ENCODE measurements at regions of chr20 and their contacts with region 1.

Region 1: DNA sequence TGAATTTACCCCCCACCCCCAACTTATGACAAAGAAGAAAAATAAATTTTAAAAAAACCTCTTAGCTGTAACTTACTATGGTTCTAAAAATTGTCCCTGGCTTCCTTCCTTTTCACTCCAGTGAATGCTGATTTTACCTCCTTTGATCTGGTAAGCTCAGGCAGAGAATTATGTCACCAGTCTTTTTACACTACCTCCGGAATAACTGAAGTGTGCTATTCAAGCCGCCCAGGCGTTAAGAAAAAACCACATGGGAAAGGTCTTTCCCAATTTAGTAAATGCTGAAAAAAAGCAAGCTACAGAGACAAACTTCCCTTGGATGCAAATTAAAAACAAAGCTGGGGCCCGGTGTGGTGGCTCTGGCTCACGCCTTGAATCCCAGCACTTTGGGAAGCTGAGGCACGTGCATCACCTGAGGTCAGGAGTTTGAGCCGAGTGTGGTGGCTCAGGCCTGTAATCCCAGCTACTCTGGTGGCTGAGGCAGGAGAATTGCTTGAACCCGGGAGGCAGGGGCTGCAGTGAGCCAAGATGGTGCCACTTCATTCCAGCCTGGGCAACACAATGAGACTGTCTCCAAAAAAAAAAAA is 12.4 kb downstream of the SNX5 start:
- DNase-seq: no peak
- ATAC-seq: no peak
- H3K4me3 ChIP-seq: no peak overlapping the region
- H3K27ac ChIP-seq: no peak overlapping the region
- H3K4me1 ChIP-seq: peaks cover 36% of the 10 kb centered on the region
- H3K27me3 ChIP-seq: no peaks in the 10 kb centered on the region
- CTCF ChIP-seq: no peak

Region 2: DNA sequence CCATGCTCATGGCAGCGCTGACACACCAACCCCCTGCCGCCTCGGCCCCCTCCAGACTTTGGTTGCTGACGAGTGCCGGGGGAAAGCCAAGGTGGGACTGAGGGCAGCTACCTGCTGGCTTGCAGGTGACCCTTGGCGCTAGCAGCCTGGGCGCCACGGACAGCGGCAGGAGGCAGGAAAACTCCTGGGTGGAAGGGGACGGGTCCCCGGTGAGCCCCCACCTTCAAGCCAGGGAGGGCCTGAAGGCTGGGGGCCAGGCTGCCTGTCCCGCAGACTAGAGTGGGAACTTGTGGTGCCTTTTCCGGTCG is 981.4 kb before region 1 on chr20:
- CTCF ChIA-PET with region 1: no interaction called
- POLR2A ChIA-PET with region 1: interaction called, 13 read pairs
- in situ Hi-C with region 1: no loop called
- intact Hi-C with region 1: no loop called
- DNase-seq: no peak
- ATAC-seq: no peak
- H3K4me3 ChIP-seq: no peak overlapping the region
- H3K27ac ChIP-seq: no peak overlapping the region
- H3K4me1 ChIP-seq: no peaks in the 10 kb centered on the region
- H3K27me3 ChIP-seq: no peaks in the 10 kb centered on the region
- CTCF ChIP-seq: no peak

Region 3: DNA sequence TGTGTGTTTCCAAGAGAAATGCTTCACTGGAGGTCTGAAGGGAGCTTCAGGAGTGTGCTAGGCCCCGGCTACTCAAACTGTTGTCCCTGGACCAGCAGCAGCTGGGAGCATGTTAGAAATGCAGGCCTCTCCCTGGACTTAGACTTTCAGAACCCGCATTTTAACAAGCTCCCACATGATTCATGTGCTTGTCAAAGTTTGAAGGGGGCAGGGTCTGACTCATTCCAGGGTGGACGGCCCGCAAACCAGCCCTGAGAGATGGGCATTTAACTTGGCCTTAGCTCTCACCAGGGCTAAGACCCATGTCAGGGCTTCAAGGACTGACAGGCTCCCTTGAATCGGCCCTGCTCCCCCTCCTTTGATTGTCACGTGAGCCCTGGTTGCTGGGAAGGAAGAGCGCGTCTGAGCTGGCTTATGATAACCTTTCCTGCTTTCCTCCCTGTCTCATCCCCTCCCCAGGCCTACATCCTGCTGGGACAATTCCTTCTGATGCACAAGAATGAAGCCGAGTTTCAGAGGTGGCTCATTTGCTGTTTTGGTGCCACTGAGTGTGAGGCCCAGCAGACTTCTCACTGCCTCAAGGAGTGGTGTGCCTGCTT is 220.9 kb before region 1 on chr20:
- CTCF ChIA-PET with region 1: interaction called, 16 read pairs
- POLR2A ChIA-PET with region 1: no interaction called
- in situ Hi-C with region 1: no loop called
- intact Hi-C with region 1: no loop called
- DNase-seq: no peak
- ATAC-seq: no peak
- H3K4me3 ChIP-seq: no peak overlapping the region
- H3K27ac ChIP-seq: no peak overlapping the region
- H3K4me1 ChIP-seq: no peaks in the 10 kb centered on the region
- H3K27me3 ChIP-seq: no peaks in the 10 kb centered on the region
- CTCF ChIP-seq: no peak

Region 4: DNA sequence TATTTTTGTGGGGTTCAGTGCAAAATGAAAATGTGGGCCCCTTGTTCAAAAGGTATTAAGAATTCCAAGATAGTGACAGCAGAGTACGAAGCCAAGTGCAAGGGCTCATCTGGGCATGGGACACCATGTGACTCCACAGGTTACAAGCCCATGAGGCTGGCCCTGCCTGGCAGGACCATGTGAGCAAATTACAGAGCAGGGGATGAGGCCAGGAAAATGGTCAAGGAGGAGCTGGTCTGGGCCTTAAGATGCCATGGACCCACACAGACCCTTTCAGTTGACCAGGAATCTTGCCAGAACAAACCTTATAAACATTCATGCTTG is 74.5 kb before region 1 on chr20:
- CTCF ChIA-PET with region 1: no interaction called
- POLR2A ChIA-PET with region 1: interaction called, 11 read pairs
- in situ Hi-C with region 1: no loop called
- intact Hi-C with region 1: no loop called
- DNase-seq: no peak
- ATAC-seq: no peak; the same call in 1 of the 2 replicates
- H3K4me3 ChIP-seq: no peak overlapping the region
- H3K27ac ChIP-seq: no peak overlapping the region
- H3K4me1 ChIP-seq: peaks cover 14% of the 10 kb centered on the region
- H3K27me3 ChIP-seq: no peaks in the 10 kb centered on the region
- CTCF ChIP-seq: no peak

Region 5: GRCh38 chr20:18164356-18164755 is 208.2 kb after region 1 on chr20:
- CTCF ChIA-PET with region 1: no interaction called
- POLR2A ChIA-PET with region 1: no interaction called
- in situ Hi-C with region 1: no loop called
- intact Hi-C with region 1: no loop called
- DNase-seq: no peak
- ATAC-seq: no peak
- H3K4me3 ChIP-seq: no peak overlapping the region
- H3K27ac ChIP-seq: no peak overlapping the region
- H3K4me1 ChIP-seq: no peaks in the 10 kb centered on the region
- H3K27me3 ChIP-seq: no peaks in the 10 kb centered on the region
- CTCF ChIP-seq: no peak

Measured in Panc1 (cell line).